ENCODE measurements at regions of chr13 and their contacts with region 1.

Region 1: GRCh38 chr13:24160454-24161009 is at the start of gene SPATA13:
- DNase-seq: peak; percentile 86
- H3K4me3 Mint-ChIP-seq: peak within 1 kb of the TSS; percentile 92
- H3K27ac Mint-ChIP-seq: peak within 1 kb of the TSS; percentile 76
- H3K4me1 Mint-ChIP-seq: peaks cover 26% of the 10 kb centered on the region
- H3K27me3 Mint-ChIP-seq: peaks cover 7% of the 10 kb centered on the region
- total RNA-seq, gene SPATA13: 56.2 and 56.3 TPM in 2 replicates

Region 2: GRCh38 chr13:23888658-23889614 is 271.6 kb before region 1 on chr13 and contains the start of gene MIPEP:
- intact Hi-C with region 1: loop called (anchors 1 kb)
- DNase-seq: peak; percentile 86
- H3K4me3 Mint-ChIP-seq: peak within 1 kb of the TSS; percentile 89
- H3K27ac Mint-ChIP-seq: peak within 1 kb of the TSS; percentile 90
- H3K4me1 Mint-ChIP-seq: peaks cover 31% of the 10 kb centered on the region
- H3K27me3 Mint-ChIP-seq: no peaks in the 10 kb centered on the region
- total RNA-seq, gene MIPEP: 7.3 and 7.8 TPM in 2 replicates

Region 3: DNA sequence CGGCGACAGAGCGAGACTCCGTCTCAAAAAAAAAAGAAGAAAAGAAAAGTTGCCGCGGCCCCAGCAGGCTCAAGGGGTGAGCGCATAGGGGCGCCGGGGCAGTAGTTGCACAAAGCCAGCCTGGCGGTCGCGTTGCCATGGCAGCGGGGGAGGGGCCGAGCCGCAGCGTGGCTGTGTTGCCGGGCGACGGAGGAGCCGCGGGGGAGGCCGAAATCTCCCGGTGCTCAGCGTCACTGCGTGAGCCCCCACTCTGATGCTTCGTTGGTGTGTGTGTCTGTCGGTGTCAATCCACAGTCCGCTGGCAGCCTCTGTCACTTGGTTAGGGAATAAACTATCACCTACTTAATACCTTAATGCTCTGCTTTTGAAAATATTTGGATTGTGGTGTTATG is 180.4 kb before region 1 on chr13:
- intact Hi-C with region 1: loop called (anchors 5 kb)
- DNase-seq: peak; percentile 89
- H3K4me3 Mint-ChIP-seq: peak overlapping the region; percentile 90
- H3K27ac Mint-ChIP-seq: peak overlapping the region; percentile 79
- H3K4me1 Mint-ChIP-seq: peaks cover 18% of the 10 kb centered on the region
- H3K27me3 Mint-ChIP-seq: peaks cover 53% of the 10 kb centered on the region

Region 4: GRCh38 chr13:24053519-24054251 is 106.8 kb before region 1 on chr13:
- intact Hi-C with region 1: loop called (anchors 1 kb)
- DNase-seq: peak; percentile 55
- H3K4me3 Mint-ChIP-seq: no peak overlapping the region
- H3K27ac Mint-ChIP-seq: no peak overlapping the region
- H3K4me1 Mint-ChIP-seq: peaks cover 20% of the 10 kb centered on the region
- H3K27me3 Mint-ChIP-seq: peaks cover 15% of the 10 kb centered on the region

Region 5: GRCh38 chr13:24127038-24127643 is 33.4 kb before region 1 on chr13:
- intact Hi-C with region 1: loop called (anchors 2 kb)
- DNase-seq: peak; percentile 5
- H3K4me3 Mint-ChIP-seq: no peak overlapping the region
- H3K27ac Mint-ChIP-seq: peak overlapping the region; percentile 36
- H3K4me1 Mint-ChIP-seq: peaks cover 49% of the 10 kb centered on the region
- H3K27me3 Mint-ChIP-seq: peaks cover 8% of the 10 kb centered on the region

Region 6: DNA sequence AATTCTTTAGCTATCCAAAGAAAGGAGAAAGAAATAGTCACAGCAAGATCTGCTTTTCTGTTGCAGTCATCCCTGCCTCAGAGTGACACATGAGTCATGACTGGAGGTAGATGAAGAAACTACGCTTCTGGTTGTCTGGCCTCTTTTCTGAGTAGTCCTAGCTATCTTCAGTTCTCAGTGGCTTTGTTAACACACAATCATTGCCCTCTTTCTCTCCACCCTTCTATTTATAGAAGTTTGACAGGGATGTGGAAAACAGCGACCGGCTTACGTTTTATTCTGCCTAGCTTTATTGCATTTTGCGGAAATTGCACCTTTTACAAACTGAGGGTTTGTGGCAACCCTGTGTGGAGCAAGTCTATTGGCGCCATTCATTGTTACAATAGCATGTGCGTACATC is 26.7 kb after region 1 on chr13:
- intact Hi-C with region 1: loop called (anchors 1 kb)
- DNase-seq: peak; percentile 3
- H3K4me3 Mint-ChIP-seq: peak overlapping the region; percentile 42
- H3K27ac Mint-ChIP-seq: peak overlapping the region; percentile 86
- H3K4me1 Mint-ChIP-seq: peaks cover 63% of the 10 kb centered on the region
- H3K27me3 Mint-ChIP-seq: no peaks in the 10 kb centered on the region

Region 7: GRCh38 chr13:24459234-24459633 is 298.7 kb after region 1 on chr13:
- intact Hi-C with region 1: loop called (anchors 2 kb)
- DNase-seq: no peak
- H3K4me3 Mint-ChIP-seq: no peak overlapping the region
- H3K27ac Mint-ChIP-seq: peak overlapping the region; percentile 50
- H3K4me1 Mint-ChIP-seq: peaks cover 37% of the 10 kb centered on the region
- H3K27me3 Mint-ChIP-seq: no peaks in the 10 kb centered on the region

Measured in activated T-helper 1 cell treated with anti-CD3 and anti-CD28 coated beads, Interleukin-12 subunit alpha, Interleukin-12 subunit beta, Interleukin-2, Interleukin-4 antibody, amounts not matched to agents 30 ng/mL and 10 ng/mL and 1 ng/mL, durations not matched to agents 14 hours and 24 hours and 36 hours (primary cell).